Calu3 (cell line): ENCODE measurements at regions of chr4 and their contacts with region 1.

Region 1: DNA sequence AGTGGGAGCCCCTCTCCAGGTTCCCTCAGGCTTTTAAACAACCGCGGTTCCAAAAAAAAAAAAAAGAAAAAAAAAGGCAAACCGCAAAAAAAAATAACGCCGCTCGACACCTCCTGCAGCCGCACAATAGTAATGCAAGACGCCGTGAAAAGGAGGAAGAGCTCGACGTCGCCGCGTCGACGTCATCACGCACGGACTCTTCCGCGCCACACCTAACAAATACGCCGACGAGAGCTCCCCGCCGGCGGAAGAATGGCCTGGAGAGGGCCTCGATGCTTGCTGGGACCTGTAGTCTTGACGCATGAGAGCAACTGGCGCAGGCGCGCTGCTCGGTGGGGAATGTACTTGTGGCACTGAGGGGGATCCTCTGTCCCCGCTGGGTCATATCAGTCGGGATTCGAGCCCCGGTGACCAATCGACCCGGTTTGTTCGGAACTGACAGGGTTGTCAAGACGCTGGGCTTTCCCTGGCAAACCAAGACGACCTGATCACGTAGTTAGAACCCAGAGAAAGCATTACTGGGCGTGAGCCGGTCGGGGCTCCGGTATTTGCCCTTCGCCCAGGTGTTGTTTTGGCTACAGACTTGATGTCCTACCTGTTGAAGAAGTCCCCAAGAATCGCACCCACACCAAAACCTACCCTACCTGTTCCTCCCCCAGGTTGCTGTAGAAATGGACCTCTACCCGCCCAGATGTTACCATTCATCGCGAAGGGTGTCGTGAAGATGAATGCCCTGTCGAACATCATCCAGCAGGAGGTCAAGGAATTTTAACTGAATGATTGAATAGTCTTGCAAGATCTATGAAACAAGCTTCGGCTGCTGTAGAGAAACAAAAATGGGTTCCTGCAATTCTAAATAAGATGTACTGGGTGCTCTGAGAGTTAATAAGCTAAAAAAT is at the start of gene CBR4:
- DNase-seq: peak; percentile 87
- H3K4me3 Mint-ChIP-seq: peak within 1 kb of the TSS; percentile 80
- H3K27ac Mint-ChIP-seq: peak within 1 kb of the TSS; percentile 88
- H3K4me1 Mint-ChIP-seq: peaks cover 42% of the 10 kb centered on the region
- H3K27me3 Mint-ChIP-seq: no peaks in the 10 kb centered on the region
- CTCF ChIP-seq: no peak
- total RNA-seq, gene CBR4: 18.1 and 18.5 TPM in 2 replicates

Region 2: GRCh38 chr4:168451744-168452390 is 558.5 kb before region 1 on chr4:
- CTCF ChIA-PET with region 1: no interaction called
- intact Hi-C with region 1: no loop called
- DNase-seq: no peak
- H3K4me3 Mint-ChIP-seq: peak overlapping the region; percentile 11
- H3K27ac Mint-ChIP-seq: peak overlapping the region; percentile 54
- H3K4me1 Mint-ChIP-seq: peaks cover 17% of the 10 kb centered on the region
- H3K27me3 Mint-ChIP-seq: no peaks in the 10 kb centered on the region
- CTCF ChIP-seq: no peak

Region 3: GRCh38 chr4:168514249-168514852 is 496.0 kb before region 1 on chr4:
- CTCF ChIA-PET with region 1: no interaction called
- intact Hi-C with region 1: loop called (anchors 10 kb)
- DNase-seq: no peak
- H3K4me3 Mint-ChIP-seq: no peak overlapping the region
- H3K27ac Mint-ChIP-seq: no peak overlapping the region
- H3K4me1 Mint-ChIP-seq: no peaks in the 10 kb centered on the region
- H3K27me3 Mint-ChIP-seq: no peaks in the 10 kb centered on the region
- CTCF ChIP-seq: peak; percentile 20

Region 4: GRCh38 chr4:168923526-168924194 is 86.7 kb before region 1 on chr4:
- CTCF ChIA-PET with region 1: no interaction called
- intact Hi-C with region 1: loop called (anchors 5 kb)
- DNase-seq: peak; percentile 48
- H3K4me3 Mint-ChIP-seq: no peak overlapping the region
- H3K27ac Mint-ChIP-seq: no peak overlapping the region
- H3K4me1 Mint-ChIP-seq: peaks cover 5% of the 10 kb centered on the region
- H3K27me3 Mint-ChIP-seq: no peaks in the 10 kb centered on the region
- CTCF ChIP-seq: peak; percentile 51

Region 5: GRCh38 chr4:169069972-169070902 is 59.9 kb after region 1 on chr4:
- CTCF ChIA-PET with region 1: interaction called, 5 read pairs
- intact Hi-C with region 1: loop called (anchors 5 kb)
- DNase-seq: peak; percentile 84
- H3K4me3 Mint-ChIP-seq: peak overlapping the region; percentile 54
- H3K27ac Mint-ChIP-seq: peak overlapping the region; percentile 97
- H3K4me1 Mint-ChIP-seq: peaks cover 30% of the 10 kb centered on the region
- H3K27me3 Mint-ChIP-seq: no peaks in the 10 kb centered on the region
- CTCF ChIP-seq: no peak

Region 6: GRCh38 chr4:169115897-169116254 is 105.5 kb after region 1 on chr4:
- CTCF ChIA-PET with region 1: interaction called, 7 read pairs
- intact Hi-C with region 1: loop called (anchors 5 kb)
- DNase-seq: peak; percentile 78
- H3K4me3 Mint-ChIP-seq: peak overlapping the region; percentile 5
- H3K27ac Mint-ChIP-seq: peak overlapping the region; percentile 85
- H3K4me1 Mint-ChIP-seq: peaks cover 68% of the 10 kb centered on the region
- H3K27me3 Mint-ChIP-seq: no peaks in the 10 kb centered on the region
- CTCF ChIP-seq: no peak

Region 7: DNA sequence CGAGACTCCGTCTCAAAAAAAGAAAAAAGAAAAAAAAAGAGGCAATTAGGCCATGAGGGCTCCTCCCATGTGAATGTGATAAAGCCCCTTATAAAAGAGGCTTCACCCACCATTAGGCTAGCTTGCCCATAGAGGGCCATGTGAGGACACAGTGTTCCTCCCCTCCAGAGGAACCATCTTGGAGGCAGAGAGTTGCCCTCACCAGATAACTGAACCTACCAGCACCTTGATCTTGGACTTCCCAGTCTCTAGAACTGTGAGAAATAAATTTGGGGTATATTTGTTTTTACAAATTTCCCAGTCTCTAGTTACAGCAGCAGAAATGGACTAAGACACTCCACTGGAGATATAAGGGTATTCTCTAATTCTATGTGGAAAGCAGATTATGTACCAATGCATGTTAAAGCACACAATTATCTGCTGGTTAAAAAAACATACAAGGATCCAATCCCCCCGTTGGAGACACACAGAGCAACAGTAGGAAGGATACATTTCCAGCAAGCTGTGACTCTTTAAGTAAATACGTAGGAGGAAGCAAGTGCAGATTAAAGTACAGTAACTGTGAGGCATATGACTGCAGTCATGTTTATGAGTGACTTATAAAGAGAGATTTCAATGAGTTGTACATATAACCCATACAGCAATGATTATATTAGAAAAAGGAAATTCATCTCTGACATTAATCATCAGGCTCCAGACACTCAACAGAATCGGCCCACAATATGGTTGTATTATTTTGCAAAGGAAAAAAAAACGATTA is 239.0 kb after region 1 on chr4:
- CTCF ChIA-PET with region 1: interaction called, 4 read pairs
- intact Hi-C with region 1: loop called (anchors 2 kb)
- DNase-seq: no peak
- H3K4me3 Mint-ChIP-seq: peak overlapping the region; percentile 31
- H3K27ac Mint-ChIP-seq: peak overlapping the region; percentile 99
- H3K4me1 Mint-ChIP-seq: peaks cover 45% of the 10 kb centered on the region
- H3K27me3 Mint-ChIP-seq: no peaks in the 10 kb centered on the region
- CTCF ChIP-seq: no peak